Naive thymus-derived CD4-positive, alpha-beta T cell (primary cell): ENCODE measurements at regions of chr3 and their contacts with region 1.

Region 1: GRCh38 chr3:194592798-194593752 is 40.1 kb downstream of the TMEM44 start:
- DNase-seq: no peak
- ATAC-seq: no peak
- H3K4me3 ChIP-seq: no peak overlapping the region
- H3K4me3 Mint-ChIP-seq: no peak overlapping the region
- H3K27ac ChIP-seq: no peak overlapping the region
- H3K27ac Mint-ChIP-seq: no peak overlapping the region
- H3K4me1 ChIP-seq: no peaks in the 10 kb centered on the region
- H3K4me1 Mint-ChIP-seq: peaks cover 0 to 7% (median 4%) of the 10 kb centered on the region in 7 donors
- H3K27me3 ChIP-seq: no peaks in the 10 kb centered on the region
- H3K27me3 Mint-ChIP-seq: no peaks in the 10 kb centered on the region

Region 2: GRCh38 chr3:194497821-194498598 is 95.1 kb before region 1 on chr3:
- CTCF ChIA-PET with region 1: no interaction called
- POLR2A ChIA-PET with region 1: no interaction called
- intact Hi-C with region 1: no loop called
- DNase-seq: no peak
- ATAC-seq: peak; percentile 53
- H3K4me3 ChIP-seq: no peak overlapping the region
- H3K4me3 Mint-ChIP-seq: no peak overlapping the region
- H3K27ac ChIP-seq: no peak overlapping the region
- H3K27ac Mint-ChIP-seq: no peak overlapping the region
- H3K4me1 ChIP-seq: no peaks in the 10 kb centered on the region
- H3K4me1 Mint-ChIP-seq: peaks cover 4 to 17% (median 16%) of the 10 kb centered on the region in 7 donors
- H3K27me3 ChIP-seq: no peaks in the 10 kb centered on the region
- H3K27me3 Mint-ChIP-seq: no peaks in the 10 kb centered on the region

Region 3: GRCh38 chr3:194632809-194633348 is 39.8 kb after region 1 on chr3:
- CTCF ChIA-PET with region 1: no interaction called
- POLR2A ChIA-PET with region 1: no interaction called
- intact Hi-C with region 1: loop called in 1 of 2 experiments (anchors 1 kb)
- DNase-seq: no peak
- ATAC-seq: peak; percentile 59
- H3K4me3 ChIP-seq: peak overlapping the region; percentile 45
- H3K4me3 Mint-ChIP-seq: peak overlapping the region; percentile 67 to 91 (median 84)
- H3K27ac ChIP-seq: peak overlapping the region; percentile 60
- H3K27ac Mint-ChIP-seq: peak overlapping the region in 2 of 9 donors; percentile 14 to 54
- H3K4me1 ChIP-seq: no peaks in the 10 kb centered on the region
- H3K4me1 Mint-ChIP-seq: peaks cover 0 to 21% (median 8%) of the 10 kb centered on the region in 7 donors
- H3K27me3 ChIP-seq: no peaks in the 10 kb centered on the region
- H3K27me3 Mint-ChIP-seq: no peaks in the 10 kb centered on the region